Mammary epithelial cell (primary cell): ENCODE measurements at regions of chr15 and their contacts with region 1.

Region 1: GRCh38 chr15:37100109-37100965 is at the start of gene MEIS2:
- DNase-seq: peak; percentile 87
- H3K4me3 ChIP-seq: peak within 1 kb of the TSS; percentile 76 to 99 (median 97)
- H3K27ac ChIP-seq: peak within 1 kb of the TSS; percentile 82
- H3K4me1 ChIP-seq: peaks cover 10% of the 10 kb centered on the region
- H3K27me3 ChIP-seq: no peaks in the 10 kb centered on the region
- CTCF ChIP-seq: no peak
- total RNA-seq, gene MEIS2: 6.7 to 8.4 TPM

Region 2: GRCh38 chr15:36501063-36501678 is 599.2 kb before region 1 on chr15:
- CTCF ChIA-PET with region 1: no interaction called
- dilution Hi-C with region 1: no loop called
- in situ Hi-C with region 1: loop called in 1 of 2 experiments (anchors 25 kb)
- intact Hi-C with region 1: loop called (anchors 2 kb)
- DNase-seq: peak; percentile 63
- H3K4me3 ChIP-seq: no peak overlapping the region
- H3K27ac ChIP-seq: no peak overlapping the region
- H3K4me1 ChIP-seq: no peaks in the 10 kb centered on the region
- H3K27me3 ChIP-seq: no peaks in the 10 kb centered on the region
- CTCF ChIP-seq: peak; percentile 73 to 95

Region 3: DNA sequence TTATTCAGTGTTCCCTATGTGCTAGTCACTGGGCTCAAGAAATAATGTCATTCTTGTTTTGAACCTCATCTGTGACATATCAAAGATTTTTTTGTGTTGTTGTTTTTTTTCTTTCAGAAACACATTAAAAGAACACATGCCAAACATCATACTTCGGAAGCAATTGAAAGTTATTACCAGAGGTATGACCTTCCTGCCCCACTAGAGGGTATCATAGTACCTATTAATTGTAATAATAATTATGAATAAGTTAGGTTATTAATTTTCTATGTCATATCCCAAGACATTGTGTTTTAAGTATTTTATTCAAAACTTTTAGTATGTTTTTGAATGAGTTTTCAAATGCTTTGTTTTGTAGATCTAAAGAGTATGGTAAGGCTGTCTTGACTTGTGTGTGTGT is 455.2 kb before region 1 on chr15:
- CTCF ChIA-PET with region 1: no interaction called
- dilution Hi-C with region 1: no loop called
- in situ Hi-C with region 1: no loop called
- intact Hi-C with region 1: loop called (anchors 10 kb)
- DNase-seq: no peak
- H3K4me3 ChIP-seq: no peak overlapping the region
- H3K27ac ChIP-seq: no peak overlapping the region
- H3K4me1 ChIP-seq: peaks cover 6% of the 10 kb centered on the region
- H3K27me3 ChIP-seq: no peaks in the 10 kb centered on the region
- CTCF ChIP-seq: no peak

Region 4: DNA sequence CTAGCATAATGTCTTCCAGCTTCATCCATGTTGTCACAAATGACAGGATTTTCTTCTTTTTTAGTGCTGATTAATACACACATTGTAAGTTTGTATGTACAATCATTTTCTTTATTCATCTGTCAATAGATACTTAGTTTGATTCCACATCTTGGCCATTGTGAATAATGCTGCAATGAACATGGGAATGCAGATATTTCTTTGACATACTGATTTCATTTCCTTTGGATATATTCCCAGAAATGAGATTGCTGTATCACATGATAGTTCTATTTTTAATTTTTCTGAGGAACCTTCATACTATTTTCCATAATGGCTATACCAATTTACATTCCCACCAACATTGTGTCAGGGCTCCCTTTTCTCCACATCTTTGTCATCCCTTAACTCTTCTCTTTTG is 117.9 kb before region 1 on chr15:
- CTCF ChIA-PET with region 1: no interaction called
- dilution Hi-C with region 1: no loop called
- in situ Hi-C with region 1: no loop called
- intact Hi-C with region 1: loop called (anchors 10 kb)
- DNase-seq: no peak
- H3K4me3 ChIP-seq: no peak overlapping the region
- H3K27ac ChIP-seq: no peak overlapping the region
- H3K4me1 ChIP-seq: no peaks in the 10 kb centered on the region
- H3K27me3 ChIP-seq: no peaks in the 10 kb centered on the region
- CTCF ChIP-seq: no peak

Region 5: GRCh38 chr15:37059086-37059485 is 41.3 kb before region 1 on chr15:
- CTCF ChIA-PET with region 1: no interaction called
- dilution Hi-C with region 1: no loop called
- in situ Hi-C with region 1: no loop called
- intact Hi-C with region 1: loop called (anchors 1 kb)
- DNase-seq: peak; percentile 82
- H3K4me3 ChIP-seq: no peak overlapping the region
- H3K27ac ChIP-seq: peak overlapping the region; percentile 14
- H3K4me1 ChIP-seq: peaks cover 19% of the 10 kb centered on the region
- H3K27me3 ChIP-seq: no peaks in the 10 kb centered on the region
- CTCF ChIP-seq: no peak

Region 6: GRCh38 chr15:37134699-37135131 is 34.4 kb after region 1 on chr15:
- CTCF ChIA-PET with region 1: no interaction called
- dilution Hi-C with region 1: no loop called
- in situ Hi-C with region 1: no loop called
- intact Hi-C with region 1: no loop called
- DNase-seq: peak; percentile 10
- H3K4me3 ChIP-seq: no peak overlapping the region
- H3K27ac ChIP-seq: no peak overlapping the region
- H3K4me1 ChIP-seq: no peaks in the 10 kb centered on the region
- H3K27me3 ChIP-seq: peaks cover 4% of the 10 kb centered on the region
- CTCF ChIP-seq: peak; percentile 64 to 67